CD4-positive, alpha-beta T cell (primary cell): ENCODE measurements at regions of chr2 and their contacts with region 1.

Region 1: DNA sequence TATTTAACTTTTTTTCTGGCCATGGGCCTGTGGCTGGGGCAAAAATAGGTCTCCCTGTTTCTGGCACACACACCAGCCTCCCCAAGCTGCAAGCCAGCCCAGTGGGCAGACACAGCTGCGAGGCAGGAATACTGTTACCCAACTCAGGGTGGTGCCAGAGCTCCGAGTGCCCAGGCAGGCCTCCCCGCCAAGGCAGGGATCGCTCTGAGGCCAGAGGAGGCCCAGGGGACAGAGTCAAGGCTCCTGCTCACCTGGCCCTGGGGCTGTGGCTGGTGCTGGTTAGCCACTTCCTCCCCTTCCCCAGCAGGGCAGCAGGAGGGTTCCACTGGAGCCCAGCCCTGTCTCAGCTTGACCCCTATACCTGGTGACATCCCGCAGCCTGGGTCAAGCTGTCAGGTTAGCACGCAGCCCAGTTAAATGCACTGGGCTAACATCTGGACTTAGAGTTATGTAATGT is 67.1 kb upstream of the EPAS1 start:
- DNase-seq: peak in 5 of 14 experiments; percentile 10 to 44 (median 22)
- ATAC-seq: peak; percentile 35
- H3K4me3 ChIP-seq: no peak overlapping the region
- H3K4me3 Mint-ChIP-seq: no peak overlapping the region
- H3K27ac ChIP-seq: no peak overlapping the region
- H3K27ac Mint-ChIP-seq: peak overlapping the region; percentile 21
- H3K4me1 ChIP-seq: peaks cover 18% of the 10 kb centered on the region
- H3K4me1 Mint-ChIP-seq: peaks cover 19% of the 10 kb centered on the region
- H3K27me3 ChIP-seq: no peaks in the 10 kb centered on the region
- H3K27me3 Mint-ChIP-seq: no peaks in the 10 kb centered on the region
- CTCF ChIP-seq: no peak

Region 2: GRCh38 chr2:46179037-46179652 is 51.0 kb before region 1 on chr2:
- CTCF ChIA-PET with region 1: no interaction called
- POLR2A ChIA-PET with region 1: no interaction called
- intact Hi-C with region 1: loop called in 1 of 2 experiments (anchors 10 kb)
- DNase-seq: peak; percentile 16 to 84 (median 37)
- ATAC-seq: peak; percentile 94
- H3K4me3 ChIP-seq: no peak overlapping the region
- H3K4me3 Mint-ChIP-seq: no peak overlapping the region
- H3K27ac ChIP-seq: no peak overlapping the region
- H3K27ac Mint-ChIP-seq: peak overlapping the region; percentile 57
- H3K4me1 ChIP-seq: peaks cover 13% of the 10 kb centered on the region
- H3K4me1 Mint-ChIP-seq: peaks cover 18% of the 10 kb centered on the region
- H3K27me3 ChIP-seq: no peaks in the 10 kb centered on the region
- H3K27me3 Mint-ChIP-seq: no peaks in the 10 kb centered on the region
- CTCF ChIP-seq: no peak